Thyroid gland (tissue), 4 donors: ENCODE measurements at regions of chr10 and their contacts with region 1.

Region 1: GRCh38 chr10:26557641-26558014 is 119.5 kb downstream of the APBB1IP start:
- DNase-seq: no peak
- H3K4me3 ChIP-seq: no peak overlapping the region
- H3K27ac ChIP-seq: no peak overlapping the region
- H3K4me1 ChIP-seq: peaks cover 0 to 7% of the 10 kb centered on the region in 2 donors
- H3K27me3 ChIP-seq: no peaks in the 10 kb centered on the region
- CTCF ChIP-seq: no peak
- POLR2A ChIP-seq: no peak

Region 2: GRCh38 chr10:26334932-26335573 is 222.6 kb before region 1 on chr10:
- intact Hi-C with region 1: loop called (anchors 2 kb)
- DNase-seq: peak; percentile 48 to 57
- H3K4me3 ChIP-seq: no peak overlapping the region
- H3K27ac ChIP-seq: no peak overlapping the region
- H3K4me1 ChIP-seq: no peaks in the 10 kb centered on the region
- H3K27me3 ChIP-seq: no peaks in the 10 kb centered on the region
- CTCF ChIP-seq: peak; percentile 15 to 93 (median 80)
- POLR2A ChIP-seq: no peak